AG04449 (cell line): ENCODE measurements at regions of chr1 and their contacts with region 1.

Region 1: GRCh38 chr1:47388891-47389238 is 27.2 kb upstream of the FOXE3 start:
- DNase-seq: no peak
- H3K4me3 ChIP-seq: no peak overlapping the region
- CTCF ChIP-seq: peak; percentile 84

Region 2: GRCh38 chr1:47179017-47179987 is 209.6 kb before region 1 on chr1:
- CTCF ChIA-PET with region 1: interaction called, 16 read pairs
- POLR2A ChIA-PET with region 1: no interaction called
- DNase-seq: peak; percentile 72
- H3K4me3 ChIP-seq: peak overlapping the region; percentile 60
- CTCF ChIP-seq: peak; percentile 97

Region 3: GRCh38 chr1:47378147-47378546 is 10.7 kb before region 1 on chr1:
- CTCF ChIA-PET with region 1: interaction called, 20 read pairs
- POLR2A ChIA-PET with region 1: no interaction called
- DNase-seq: no peak
- H3K4me3 ChIP-seq: no peak overlapping the region
- CTCF ChIP-seq: no peak

Region 4: DNA sequence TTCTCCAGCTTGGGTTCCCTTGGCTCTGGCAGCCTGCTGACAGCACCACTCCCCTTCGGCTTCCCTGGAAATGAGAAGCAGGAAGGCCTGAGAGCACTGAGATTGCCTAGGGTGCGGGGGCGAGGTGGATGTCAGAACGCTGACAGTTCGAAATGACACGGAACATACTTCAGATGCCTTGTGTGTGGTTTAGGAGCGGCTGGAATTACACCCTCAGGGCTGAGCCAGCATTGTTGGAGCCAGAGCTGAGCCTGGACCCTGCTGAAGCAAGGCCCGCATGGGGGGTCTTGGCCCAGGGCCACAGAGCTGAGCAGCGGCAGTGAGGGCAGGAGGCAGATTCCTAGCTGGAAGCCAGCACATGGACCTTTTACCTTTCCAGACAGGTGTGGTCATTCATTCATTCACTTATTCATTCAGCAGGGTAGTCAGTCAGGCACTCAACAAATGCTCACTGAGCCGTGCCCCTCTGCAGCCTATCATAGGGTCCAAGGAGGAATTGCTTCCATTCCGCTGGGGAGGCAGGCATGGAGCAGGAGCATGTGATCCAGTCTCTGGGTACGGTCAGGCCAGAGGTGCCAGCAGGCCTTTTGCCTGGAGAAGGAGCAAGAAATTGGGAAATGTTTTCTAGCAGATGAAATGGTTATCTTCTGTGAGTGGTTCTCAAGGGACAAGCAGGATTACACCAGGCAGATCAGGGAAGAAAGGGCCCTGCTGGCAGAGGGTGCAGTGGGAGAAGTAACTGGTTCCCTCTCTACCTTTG is 20.6 kb after region 1 on chr1:
- CTCF ChIA-PET with region 1: interaction called, 78 read pairs
- POLR2A ChIA-PET with region 1: interaction called, 3 read pairs
- DNase-seq: peak; percentile 41
- H3K4me3 ChIP-seq: no peak overlapping the region
- CTCF ChIP-seq: no peak

Region 5: GRCh38 chr1:47471163-47471562 is 82.3 kb after region 1 on chr1:
- CTCF ChIA-PET with region 1: no interaction called
- POLR2A ChIA-PET with region 1: no interaction called
- DNase-seq: no peak
- H3K4me3 ChIP-seq: no peak overlapping the region
- CTCF ChIP-seq: no peak

Region 6: GRCh38 chr1:47725992-47726855 is 337.4 kb after region 1 on chr1:
- CTCF ChIA-PET with region 1: interaction called, 64 read pairs
- POLR2A ChIA-PET with region 1: interaction called, 3 read pairs
- DNase-seq: no peak
- H3K4me3 ChIP-seq: no peak overlapping the region
- CTCF ChIP-seq: peak; percentile 93